H1 (cell line): ENCODE measurements at regions of chr17 and their contacts with region 1.

Region 1: DNA sequence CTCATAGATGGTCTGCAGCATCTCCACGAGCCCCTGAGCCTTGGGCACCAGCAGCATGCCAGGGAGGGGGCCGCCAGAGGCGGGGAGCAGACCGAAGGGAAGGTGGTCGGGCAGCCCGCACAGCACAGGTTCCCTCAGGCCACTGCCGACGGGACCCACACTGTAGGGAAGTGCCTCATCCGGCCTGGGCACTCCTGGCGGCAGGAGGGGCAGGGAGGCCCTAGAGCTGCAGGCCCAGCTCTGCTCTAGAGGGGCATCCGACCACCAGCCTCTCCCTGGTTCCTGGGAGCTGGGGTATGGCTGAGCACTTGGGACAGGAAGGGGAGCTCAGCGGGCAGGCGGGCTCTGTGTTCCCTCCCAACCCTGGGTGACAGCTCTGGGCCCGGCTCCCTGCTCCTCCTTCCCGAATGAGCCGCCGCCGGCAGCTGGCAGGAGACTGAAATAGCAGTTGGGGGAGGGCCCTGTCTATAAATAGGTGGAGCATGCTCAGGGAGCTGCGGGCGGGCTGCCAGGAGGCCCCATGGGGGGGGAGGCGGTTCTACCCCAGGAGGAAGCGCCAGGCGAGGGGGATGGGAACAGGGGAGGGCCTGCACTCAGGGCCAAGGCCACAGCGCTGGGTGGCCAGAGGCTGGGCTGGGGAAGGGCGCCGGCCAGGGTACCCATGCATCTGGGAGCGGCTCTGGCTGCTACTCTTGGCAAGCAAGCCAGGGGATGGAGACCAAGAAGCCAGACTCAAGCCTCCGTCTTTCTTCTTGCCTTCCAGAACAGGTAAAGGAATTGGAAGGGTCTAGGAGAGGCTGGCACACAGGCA is 12.4 kb downstream of the HDAC5 start:
- DNase-seq: peak; percentile 69 to 86
- H3K4me3 ChIP-seq: peak overlapping the region in 3 of 4 experiments; percentile 1 to 45 (median 15); a peak in 4 of 8 replicates
- H3K27ac ChIP-seq: no peak overlapping the region
- H3K4me1 ChIP-seq: peaks cover 0 to 29% (median 25%) of the 10 kb centered on the region in 4 experiments; a peak in 6 of 7 replicates
- H3K27me3 ChIP-seq: no peaks in the 10 kb centered on the region; a peak in 1 of 7 replicates
- CTCF ChIP-seq: no peak
- EP300 ChIP-seq: no peak
- POLR2A ChIP-seq: peak in 1 of 2 experiments; percentile 60; a peak in 1 of 3 replicates
- RAD21 ChIP-seq: peak in 1 of 2 experiments; percentile 9; a peak in 1 of 4 replicates

Region 2: GRCh38 chr17:44077595-44077909 is 33.5 kb before region 1 on chr17:
- CTCF ChIA-PET with region 1: interaction called, 638 read pairs
- POLR2A ChIA-PET with region 1: interaction called, 7 read pairs
- DNase-seq: no peak
- H3K4me3 ChIP-seq: no peak overlapping the region
- H3K27ac ChIP-seq: no peak overlapping the region
- H3K4me1 ChIP-seq: peaks cover 0 to 2% (median under 1%) of the 10 kb centered on the region in 4 experiments; a peak in 2 of 7 replicates
- H3K27me3 ChIP-seq: no peaks in the 10 kb centered on the region
- CTCF ChIP-seq: no peak
- EP300 ChIP-seq: no peak
- POLR2A ChIP-seq: no peak
- RAD21 ChIP-seq: no peak

Region 3: DNA sequence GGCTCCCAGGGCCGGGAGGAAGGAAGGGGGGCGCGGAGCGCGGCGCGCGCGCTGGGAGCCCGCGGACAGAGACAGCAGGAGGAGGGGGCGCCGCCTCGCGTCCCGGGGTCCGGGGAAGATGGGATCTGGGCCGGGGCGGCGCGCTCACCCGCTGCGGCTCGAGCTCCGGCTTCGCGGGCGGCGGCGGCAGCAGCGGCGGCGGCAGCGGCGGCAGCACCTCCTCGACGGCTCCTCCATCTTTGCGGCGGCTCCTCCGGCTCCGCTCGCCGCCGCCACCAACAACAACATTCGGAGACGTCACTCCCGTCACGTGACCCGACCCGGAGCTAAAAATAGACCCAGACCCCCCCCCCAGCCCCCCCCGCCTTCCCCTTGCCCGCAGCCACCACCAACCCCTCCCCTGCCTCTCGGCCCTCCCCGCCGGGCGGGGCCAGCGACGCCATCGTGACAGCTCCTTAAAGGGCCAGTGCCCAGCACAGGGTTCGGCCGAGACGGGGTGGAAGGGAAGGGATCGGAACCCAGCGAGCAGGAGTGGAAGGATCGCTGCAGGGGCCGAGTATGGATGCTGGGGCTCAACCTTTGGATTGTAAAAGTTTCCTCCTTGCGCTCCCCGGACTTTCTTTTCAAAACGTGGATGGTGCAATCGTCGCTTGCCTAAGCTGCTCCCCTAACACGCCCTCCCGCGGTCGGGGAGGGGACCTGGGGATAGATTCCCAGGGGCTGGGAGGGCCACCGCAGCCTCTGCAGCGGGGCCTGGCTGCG is 12.5 kb after region 1 on chr17 and contains the start of gene HDAC5:
- CTCF ChIA-PET with region 1: interaction called, 638 read pairs
- POLR2A ChIA-PET with region 1: interaction called, 24 read pairs
- DNase-seq: peak; percentile 72 to 93
- H3K4me3 ChIP-seq: peak within 1 kb of the TSS; percentile 77 to 99 (median 88)
- H3K27ac ChIP-seq: peak within 1 kb of the TSS; percentile 89
- H3K4me1 ChIP-seq: peaks cover 14 to 26% (median 18%) of the 10 kb centered on the region in 4 experiments
- H3K27me3 ChIP-seq: no peaks in the 10 kb centered on the region
- CTCF ChIP-seq: peak; percentile 19 to 57 (median 52); a peak in 3 of 4 replicates
- EP300 ChIP-seq: no peak
- POLR2A ChIP-seq: peak in 1 of 2 experiments; percentile 38; a peak in 2 of 3 replicates
- RAD21 ChIP-seq: peak; percentile 11 to 25; a peak in 2 of 4 replicates
- total RNA-seq, gene HDAC5: 48.5 and 54.0 TPM in 2 replicates

Region 4: GRCh38 chr17:44132275-44132821 is 21.3 kb after region 1 on chr17:
- CTCF ChIA-PET with region 1: interaction called, 27 read pairs
- POLR2A ChIA-PET with region 1: interaction called, 3 read pairs
- DNase-seq: no peak
- H3K4me3 ChIP-seq: no peak overlapping the region
- H3K27ac ChIP-seq: no peak overlapping the region
- H3K4me1 ChIP-seq: peaks cover 0 to under 1% (median 0%) of the 10 kb centered on the region in 4 experiments; a peak in 1 of 7 replicates
- H3K27me3 ChIP-seq: no peaks in the 10 kb centered on the region
- CTCF ChIP-seq: no peak
- EP300 ChIP-seq: no peak
- POLR2A ChIP-seq: no peak
- RAD21 ChIP-seq: no peak

Region 5: GRCh38 chr17:44144966-44145739 is 34.1 kb after region 1 on chr17:
- CTCF ChIA-PET with region 1: interaction called, 12 read pairs
- POLR2A ChIA-PET with region 1: no interaction called
- DNase-seq: no peak
- H3K4me3 ChIP-seq: no peak overlapping the region
- H3K27ac ChIP-seq: no peak overlapping the region
- H3K4me1 ChIP-seq: peaks cover 0 to 2% (median 0%) of the 10 kb centered on the region in 4 experiments; a peak in 3 of 7 replicates
- H3K27me3 ChIP-seq: no peaks in the 10 kb centered on the region
- CTCF ChIP-seq: no peak
- EP300 ChIP-seq: no peak
- POLR2A ChIP-seq: no peak
- RAD21 ChIP-seq: no peak

Region 6: GRCh38 chr17:44159519-44160210 is 48.6 kb after region 1 on chr17:
- CTCF ChIA-PET with region 1: interaction called, 22 read pairs
- POLR2A ChIA-PET with region 1: interaction called, 3 read pairs
- DNase-seq: no peak
- H3K4me3 ChIP-seq: no peak overlapping the region
- H3K27ac ChIP-seq: no peak overlapping the region
- H3K4me1 ChIP-seq: no peaks in the 10 kb centered on the region
- H3K27me3 ChIP-seq: no peaks in the 10 kb centered on the region
- CTCF ChIP-seq: no peak
- EP300 ChIP-seq: no peak
- POLR2A ChIP-seq: no peak
- RAD21 ChIP-seq: no peak